ENCODE measurements at regions of chr14 and their contacts with region 1.

Region 1: DNA sequence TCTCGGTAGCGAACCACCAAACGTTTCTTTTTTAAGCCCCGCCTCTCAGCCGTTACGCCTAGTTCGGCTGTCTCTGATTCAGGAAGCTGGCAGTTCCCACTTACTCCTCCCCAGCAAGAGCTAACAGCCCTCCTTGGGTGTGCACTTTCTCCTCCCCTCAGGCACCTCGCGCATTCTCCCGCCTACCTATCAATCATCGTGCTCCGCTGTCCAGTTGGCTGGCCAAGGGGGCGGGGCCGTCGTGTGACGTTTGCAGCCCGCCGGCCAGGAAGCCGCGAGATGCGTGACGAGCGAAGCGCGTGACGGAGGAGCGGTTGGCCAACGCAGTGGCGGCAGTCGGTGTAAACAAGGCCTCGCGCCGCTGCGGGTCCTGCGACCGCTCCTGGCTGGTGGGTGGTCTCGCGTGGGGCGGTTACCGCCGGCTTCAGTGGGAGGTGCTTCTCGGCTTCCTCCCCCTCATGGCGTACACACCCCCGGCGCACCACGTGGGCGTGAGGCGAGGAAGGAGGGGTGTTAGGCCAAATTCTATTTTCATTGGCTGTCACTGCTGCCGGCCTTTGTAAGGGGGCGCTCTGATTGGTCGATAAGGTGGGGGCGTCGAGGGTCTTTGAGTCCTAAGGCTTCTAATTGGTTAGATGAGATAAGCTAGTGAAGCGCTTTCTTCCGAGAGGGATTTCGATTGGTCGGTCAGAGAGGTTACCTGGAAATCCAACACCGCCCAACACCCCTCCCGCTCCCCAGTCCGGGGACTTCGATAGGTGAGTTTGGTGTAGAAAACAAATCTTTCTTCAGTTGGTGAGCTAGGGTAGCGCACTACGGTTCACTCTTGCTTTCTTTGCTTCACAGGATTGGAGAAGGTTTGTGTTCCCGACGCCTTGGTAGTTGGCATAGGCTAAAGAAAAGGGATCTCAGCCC is at the starts of genes DCAF11 and NRL:
- DNase-seq: peak; percentile 99
- H3K4me3 Mint-ChIP-seq: peak within 1 kb of the TSS; percentile 95
- H3K27ac Mint-ChIP-seq: peak within 1 kb of the TSS; percentile 100
- H3K4me1 Mint-ChIP-seq: peaks cover 24% of the 10 kb centered on the region
- H3K27me3 Mint-ChIP-seq: no peaks in the 10 kb centered on the region
- total RNA-seq, gene DCAF11: 85.6 to 91.8 TPM
- total RNA-seq, gene NRL: 1.2 to 1.9 TPM

Region 2: GRCh38 chr14:23469127-23469905 is 645.5 kb before region 1 on chr14 and contains the start of gene NGDN:
- CTCF ChIA-PET with region 1: no interaction called
- POLR2A ChIA-PET with region 1: no interaction called
- intact Hi-C with region 1: loop called (anchors 1 kb)
- DNase-seq: peak; percentile 95
- H3K4me3 Mint-ChIP-seq: no peak within 1 kb of the TSS
- H3K27ac Mint-ChIP-seq: no peak within 1 kb of the TSS
- H3K4me1 Mint-ChIP-seq: peaks cover 6% of the 10 kb centered on the region
- H3K27me3 Mint-ChIP-seq: no peaks in the 10 kb centered on the region
- total RNA-seq, gene NGDN: 42.1 to 44.1 TPM

Region 3: GRCh38 chr14:24058260-24058950 is 56.4 kb before region 1 on chr14:
- CTCF ChIA-PET with region 1: interaction called, 261 read pairs
- POLR2A ChIA-PET with region 1: interaction called, 18 read pairs
- intact Hi-C with region 1: loop called (anchors 1 kb)
- DNase-seq: peak; percentile 83
- H3K4me3 Mint-ChIP-seq: no peak overlapping the region
- H3K27ac Mint-ChIP-seq: peak overlapping the region; percentile 4
- H3K4me1 Mint-ChIP-seq: peaks cover 7% of the 10 kb centered on the region
- H3K27me3 Mint-ChIP-seq: peaks cover 4% of the 10 kb centered on the region

Region 4: GRCh38 chr14:24135834-24136542 is 21.2 kb after region 1 on chr14 and contains the start of gene PSME1:
- CTCF ChIA-PET with region 1: interaction called, 16 read pairs
- POLR2A ChIA-PET with region 1: interaction called, 73 read pairs
- intact Hi-C with region 1: loop called (anchors 1 kb)
- DNase-seq: peak; percentile 97
- H3K4me3 Mint-ChIP-seq: peak within 1 kb of the TSS; percentile 95
- H3K27ac Mint-ChIP-seq: peak within 1 kb of the TSS; percentile 96
- H3K4me1 Mint-ChIP-seq: peaks cover 54% of the 10 kb centered on the region
- H3K27me3 Mint-ChIP-seq: no peaks in the 10 kb centered on the region
- total RNA-seq, gene PSME1: 403 to 427 TPM

Region 5: GRCh38 chr14:24188251-24189058 is 73.7 kb after region 1 on chr14 and contains the start of gene IPO4:
- CTCF ChIA-PET with region 1: interaction called, 3 read pairs
- POLR2A ChIA-PET with region 1: interaction called, 4 read pairs
- intact Hi-C with region 1: loop called (anchors 2 kb)
- DNase-seq: peak; percentile 97
- H3K4me3 Mint-ChIP-seq: peak within 1 kb of the TSS; percentile 89
- H3K27ac Mint-ChIP-seq: peak within 1 kb of the TSS; percentile 74
- H3K4me1 Mint-ChIP-seq: peaks cover 40% of the 10 kb centered on the region
- H3K27me3 Mint-ChIP-seq: no peaks in the 10 kb centered on the region
- total RNA-seq, gene IPO4: 69.5 to 72.6 TPM

Region 6: GRCh38 chr14:24241829-24242443 is 127.1 kb after region 1 on chr14:
- CTCF ChIA-PET with region 1: interaction called, 3 read pairs
- POLR2A ChIA-PET with region 1: interaction called, 7 read pairs
- intact Hi-C with region 1: loop called (anchors 1 kb)
- DNase-seq: peak; percentile 94
- H3K4me3 Mint-ChIP-seq: peak overlapping the region; percentile 84
- H3K27ac Mint-ChIP-seq: peak overlapping the region; percentile 96
- H3K4me1 Mint-ChIP-seq: peaks cover 59% of the 10 kb centered on the region
- H3K27me3 Mint-ChIP-seq: no peaks in the 10 kb centered on the region